ENCODE measurements at regions of chr1 and their contacts with region 1.

Region 1: GRCh38 chr1:19390901-19391595 is 78.9 kb downstream of the SLC66A1 start:
- DNase-seq: no peak

Region 2: GRCh38 chr1:19311959-19312781 is 78.9 kb before region 1 on chr1 and contains the starts of genes AKR7A2 and SLC66A1:
- intact Hi-C with region 1: no loop called
- DNase-seq: peak; percentile 97
- total RNA-seq, gene AKR7A2: 18.8 to 29.9 TPM
- total RNA-seq, gene SLC66A1: 7.4 to 8.2 TPM

Region 3: GRCh38 chr1:19643602-19644394 is 252.8 kb after region 1 on chr1 and contains the start of gene NBL1:
- intact Hi-C with region 1: loop called in 1 of 2 experiments (anchors 5 kb)
- DNase-seq: peak; percentile 92
- total RNA-seq, gene NBL1: 137 to 186 TPM

Measured in posterior vena cava (tissue), 2 donors.